HepG2 (cell line): ENCODE measurements at regions of chr5 and their contacts with region 1.

Region 1: DNA sequence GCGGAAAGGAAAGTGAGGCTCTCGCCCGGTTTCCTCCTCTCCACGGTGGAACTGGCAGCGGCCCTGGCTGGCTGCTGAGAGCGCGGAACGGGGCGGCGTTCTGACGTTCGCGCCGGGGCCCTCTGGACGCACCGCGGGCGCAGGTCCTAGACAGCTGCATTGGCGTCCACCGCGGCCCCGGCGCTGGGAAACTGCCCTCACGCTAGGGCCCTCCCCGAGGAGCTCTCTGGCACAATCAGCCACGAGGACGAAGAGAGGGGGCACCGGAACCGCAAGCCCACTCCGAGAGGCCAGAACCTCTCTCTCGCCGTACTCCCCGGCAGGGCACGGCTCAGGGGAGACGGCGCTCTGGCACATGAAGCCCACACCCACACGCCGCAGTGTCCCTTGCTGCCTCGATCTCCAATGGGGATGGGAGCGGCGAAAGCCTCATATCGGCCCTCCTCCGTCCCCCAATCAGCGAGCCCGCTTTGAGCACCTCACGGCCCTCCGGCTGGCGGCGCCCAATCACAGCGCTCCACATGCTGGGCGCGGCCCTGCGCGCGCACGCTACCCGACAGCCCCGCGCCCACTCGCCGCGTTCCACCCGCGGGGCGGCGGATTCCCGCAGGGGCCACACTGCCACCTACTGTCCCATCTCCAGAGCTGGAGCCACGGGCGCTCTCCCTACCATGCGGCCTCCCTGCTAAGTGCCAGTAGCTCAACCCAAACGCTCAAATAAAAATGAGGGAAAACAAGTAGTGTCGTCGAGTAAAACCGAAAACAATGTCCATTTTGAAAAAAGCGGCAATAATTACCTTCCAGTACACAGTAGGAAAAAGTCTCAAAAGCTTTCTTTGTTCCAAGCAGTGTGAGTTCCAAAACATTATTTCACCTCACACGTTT is 11.8 kb downstream of the MRPS27 start:
- DNase-seq: peak; percentile 93
- ATAC-seq: peak; percentile 99
- H3K4me3 ChIP-seq: peak overlapping the region; percentile 76 to 91 (median 80)
- H3K27ac ChIP-seq: peak overlapping the region; percentile 98
- H3K4me1 ChIP-seq: peaks cover 47% of the 10 kb centered on the region
- H3K27me3 ChIP-seq: no peaks in the 10 kb centered on the region
- CTCF ChIP-seq: peak; percentile 92
- EP300 ChIP-seq: peak in 1 of 2 experiments; percentile 17; a peak in 1 of 4 replicates
- POLR2A ChIP-seq: peak; percentile 98 to 100
- RAD21 ChIP-seq: peak; percentile 85

Region 2: GRCh38 chr5:71782771-71783770 is 525.1 kb before region 1 on chr5:
- CTCF ChIA-PET with region 1: no interaction called
- POLR2A ChIA-PET with region 1: no interaction called
- in situ Hi-C with region 1: loop called (anchors 25 kb)
- intact Hi-C with region 1: loop called (anchors 1 kb)
- DNase-seq: peak; percentile 32
- ATAC-seq: peak; percentile 80
- H3K4me3 ChIP-seq: peak overlapping the region in 2 of 3 experiments; percentile 4 to 42; a peak in 4 of 6 replicates
- H3K27ac ChIP-seq: no peak overlapping the region
- H3K4me1 ChIP-seq: peaks cover 12% of the 10 kb centered on the region
- H3K27me3 ChIP-seq: no peaks in the 10 kb centered on the region; a peak in 1 of 5 replicates
- CTCF ChIP-seq: peak; percentile 80
- EP300 ChIP-seq: no peak
- POLR2A ChIP-seq: no peak
- RAD21 ChIP-seq: peak; percentile 39; the same call in 1 of the 2 replicates

Region 3: DNA sequence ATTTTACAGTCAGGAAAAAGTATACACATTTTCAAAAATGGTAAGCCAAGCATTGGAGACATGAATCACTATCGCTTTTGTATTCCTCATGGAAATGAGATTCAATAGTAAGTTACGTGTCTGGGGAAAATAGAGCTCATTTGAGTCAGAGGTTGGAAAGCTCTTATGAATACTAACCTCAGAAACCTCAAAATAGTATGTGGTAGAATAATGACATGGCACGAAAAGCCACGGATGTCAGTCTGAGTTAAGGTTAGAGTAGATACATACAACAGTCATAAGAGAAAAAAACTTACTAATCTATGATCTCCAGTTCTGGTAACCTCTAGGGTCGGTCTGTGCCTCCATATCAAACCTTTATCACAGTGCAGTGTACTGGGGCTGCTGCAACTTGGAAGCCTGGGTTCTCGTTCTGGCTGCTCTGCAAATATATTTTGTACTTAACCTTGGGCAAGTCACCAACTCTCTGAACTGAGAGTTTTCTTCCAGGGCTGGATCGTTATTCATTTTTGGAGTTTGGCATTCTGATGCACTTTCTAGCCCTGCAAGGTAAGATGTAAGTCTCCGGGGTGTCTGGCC is 169.2 kb before region 1 on chr5:
- CTCF ChIA-PET with region 1: interaction called, 15 read pairs
- POLR2A ChIA-PET with region 1: no interaction called
- in situ Hi-C with region 1: loop called (anchors 5 kb)
- intact Hi-C with region 1: loop called (anchors 1 kb)
- DNase-seq: no peak
- ATAC-seq: no peak
- H3K4me3 ChIP-seq: no peak overlapping the region
- H3K27ac ChIP-seq: no peak overlapping the region
- H3K4me1 ChIP-seq: no peaks in the 10 kb centered on the region
- H3K27me3 ChIP-seq: no peaks in the 10 kb centered on the region
- CTCF ChIP-seq: no peak
- EP300 ChIP-seq: no peak
- POLR2A ChIP-seq: no peak
- RAD21 ChIP-seq: no peak

Region 4: GRCh38 chr5:72244862-72245371 is 63.3 kb before region 1 on chr5:
- CTCF ChIA-PET with region 1: interaction called, 6 read pairs
- POLR2A ChIA-PET with region 1: interaction called, 5 read pairs
- in situ Hi-C with region 1: no loop called
- intact Hi-C with region 1: loop called (anchors 1 kb)
- DNase-seq: peak; percentile 54
- ATAC-seq: peak; percentile 83
- H3K4me3 ChIP-seq: no peak overlapping the region
- H3K27ac ChIP-seq: no peak overlapping the region
- H3K4me1 ChIP-seq: peaks cover 84% of the 10 kb centered on the region
- H3K27me3 ChIP-seq: no peaks in the 10 kb centered on the region
- CTCF ChIP-seq: peak; percentile 58
- EP300 ChIP-seq: no peak
- POLR2A ChIP-seq: no peak
- RAD21 ChIP-seq: 0 out of 2 replicates have a peak, but pooled peaks have one; percentile 17

Region 5: DNA sequence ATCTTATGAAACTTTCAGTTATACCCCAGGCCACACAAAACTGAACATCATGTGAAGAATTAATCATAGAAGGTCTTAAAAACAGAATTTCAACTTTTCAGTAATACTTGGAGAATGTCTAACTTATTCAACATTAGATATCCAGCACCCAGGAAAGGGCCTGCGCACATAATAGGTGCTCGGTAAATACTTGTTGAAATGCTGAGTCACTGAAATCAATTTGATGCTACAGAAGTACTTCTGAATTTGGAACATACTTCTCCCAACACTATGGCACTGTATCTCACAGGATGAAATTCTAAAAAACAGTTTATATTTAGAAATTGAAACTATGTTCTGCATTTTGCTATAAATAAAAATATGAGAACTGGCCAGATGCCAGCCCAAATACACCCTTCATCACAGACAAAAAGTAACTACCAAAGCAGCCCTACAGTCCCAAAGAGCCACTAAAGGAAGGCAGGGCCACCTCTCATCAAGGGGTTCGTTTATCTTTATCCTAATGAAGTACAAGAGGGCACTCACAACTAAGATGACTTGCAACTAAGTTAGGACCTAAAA is 14.6 kb before region 1 on chr5:
- CTCF ChIA-PET with region 1: no interaction called
- POLR2A ChIA-PET with region 1: interaction called, 10 read pairs
- in situ Hi-C with region 1: no loop called
- intact Hi-C with region 1: loop called (anchors 2 kb)
- DNase-seq: no peak
- ATAC-seq: no peak
- H3K4me3 ChIP-seq: no peak overlapping the region
- H3K27ac ChIP-seq: peak overlapping the region; percentile 29
- H3K4me1 ChIP-seq: peaks cover 54% of the 10 kb centered on the region
- H3K27me3 ChIP-seq: no peaks in the 10 kb centered on the region
- CTCF ChIP-seq: no peak
- EP300 ChIP-seq: no peak
- POLR2A ChIP-seq: no peak
- RAD21 ChIP-seq: no peak

Region 6: DNA sequence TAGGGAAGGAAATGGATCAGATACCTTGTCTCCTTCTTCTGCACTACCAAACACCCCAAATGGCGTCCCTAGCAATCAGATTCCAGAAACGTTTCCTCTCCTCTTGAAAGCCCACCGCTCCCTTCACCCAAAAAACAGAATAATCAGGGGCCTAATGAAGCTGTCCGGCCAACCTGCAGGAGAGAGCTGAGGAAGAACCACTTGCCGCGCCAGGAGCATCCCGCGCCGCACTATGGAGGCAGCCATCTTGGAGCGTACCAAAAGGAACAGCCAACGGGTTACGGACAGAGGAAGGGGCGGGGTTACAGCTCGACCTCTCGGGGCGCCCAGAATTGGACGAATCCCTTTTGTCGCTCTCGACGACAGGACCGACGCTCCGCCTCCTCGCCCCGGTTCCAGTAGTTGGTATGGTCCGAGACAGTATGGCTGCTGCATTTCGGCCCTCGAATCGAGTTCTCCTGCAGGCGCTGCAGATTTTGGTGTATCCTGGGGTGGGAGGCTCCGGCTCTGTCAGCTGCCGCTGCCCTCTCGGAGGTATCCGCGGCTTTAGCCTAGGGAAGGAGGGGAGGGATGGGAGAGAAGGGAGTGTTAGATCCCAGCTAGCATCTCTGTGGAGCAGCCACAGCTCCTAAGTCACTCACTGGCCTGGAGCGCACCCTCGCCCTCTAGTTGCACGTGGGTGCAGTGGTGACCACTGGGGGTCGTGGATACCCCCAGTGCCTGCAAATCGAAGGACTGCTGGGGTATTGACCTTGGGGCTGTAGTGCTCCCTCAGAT is 12.0 kb after region 1 on chr5 and contains the starts of genes MRPS27 and PTCD2:
- CTCF ChIA-PET with region 1: no interaction called
- POLR2A ChIA-PET with region 1: interaction called, 60 read pairs
- in situ Hi-C with region 1: no loop called
- intact Hi-C with region 1: no loop called
- DNase-seq: peak; percentile 95
- ATAC-seq: peak; percentile 99
- H3K4me3 ChIP-seq: peak within 1 kb of the TSS; percentile 65 to 91 (median 90)
- H3K27ac ChIP-seq: peak within 1 kb of the TSS; percentile 76
- H3K4me1 ChIP-seq: peaks cover 37% of the 10 kb centered on the region
- H3K27me3 ChIP-seq: no peaks in the 10 kb centered on the region; a peak in 2 of 5 replicates
- CTCF ChIP-seq: peak; percentile 53
- EP300 ChIP-seq: 0 out of 4 replicates have a peak, but pooled peaks of 1 of the 2 experiments have one; percentile 18
- POLR2A ChIP-seq: peak; percentile 88 to 89
- RAD21 ChIP-seq: no peak
- total RNA-seq, gene MRPS27: 115 and 139 TPM in 2 replicates
- total RNA-seq, gene PTCD2: 6.4 and 7.0 TPM in 2 replicates

Region 7: DNA sequence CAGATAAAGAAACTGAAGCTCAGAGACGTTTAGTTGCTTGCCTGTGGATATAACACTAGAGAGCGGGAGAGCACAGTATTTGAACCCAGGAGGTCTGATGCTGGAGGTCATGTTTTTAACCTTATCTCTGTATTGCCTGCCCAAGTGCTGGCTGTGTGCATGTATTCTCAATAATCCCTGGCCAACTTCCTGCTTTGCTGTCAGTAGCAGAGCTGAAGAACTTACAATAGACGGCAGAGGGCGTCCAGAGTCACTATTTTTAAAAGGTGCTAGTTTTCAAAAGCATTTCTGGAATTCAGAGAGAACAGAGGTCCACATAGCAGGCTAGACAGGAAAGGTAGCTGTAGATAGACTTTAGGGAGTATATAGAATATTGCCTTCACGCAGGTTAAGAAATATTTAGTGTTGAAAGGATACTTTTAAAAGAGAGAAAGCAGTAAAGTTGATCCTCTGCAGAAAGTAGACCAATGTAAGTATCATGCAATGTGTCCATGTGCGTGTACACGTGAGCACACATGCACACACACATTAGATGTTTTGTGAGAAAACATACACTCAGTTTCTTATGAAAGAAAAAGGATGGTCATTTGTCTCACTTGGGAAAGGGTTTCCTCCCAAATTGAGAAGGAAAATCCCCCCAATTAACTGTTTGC is 58.2 kb after region 1 on chr5:
- CTCF ChIA-PET with region 1: no interaction called
- POLR2A ChIA-PET with region 1: no interaction called
- in situ Hi-C with region 1: no loop called
- intact Hi-C with region 1: no loop called
- DNase-seq: peak; percentile 67
- ATAC-seq: peak; percentile 97
- H3K4me3 ChIP-seq: no peak overlapping the region
- H3K27ac ChIP-seq: no peak overlapping the region
- H3K4me1 ChIP-seq: peaks cover 6% of the 10 kb centered on the region; the same call in 1 of the 2 replicates
- H3K27me3 ChIP-seq: no peaks in the 10 kb centered on the region
- CTCF ChIP-seq: peak; percentile 77
- EP300 ChIP-seq: no peak
- POLR2A ChIP-seq: no peak
- RAD21 ChIP-seq: peak; percentile 57

Region 8: GRCh38 chr5:72427488-72428437 is 119.6 kb after region 1 on chr5:
- CTCF ChIA-PET with region 1: no interaction called
- POLR2A ChIA-PET with region 1: no interaction called
- in situ Hi-C with region 1: no loop called
- intact Hi-C with region 1: no loop called
- DNase-seq: no peak
- ATAC-seq: no peak
- H3K4me3 ChIP-seq: no peak overlapping the region
- H3K27ac ChIP-seq: no peak overlapping the region
- H3K4me1 ChIP-seq: no peaks in the 10 kb centered on the region
- H3K27me3 ChIP-seq: peaks cover 0 to 6% of the 10 kb centered on the region in 2 experiments; a peak in 1 of 5 replicates
- CTCF ChIP-seq: no peak
- EP300 ChIP-seq: no peak
- POLR2A ChIP-seq: no peak
- RAD21 ChIP-seq: no peak

Region 9: DNA sequence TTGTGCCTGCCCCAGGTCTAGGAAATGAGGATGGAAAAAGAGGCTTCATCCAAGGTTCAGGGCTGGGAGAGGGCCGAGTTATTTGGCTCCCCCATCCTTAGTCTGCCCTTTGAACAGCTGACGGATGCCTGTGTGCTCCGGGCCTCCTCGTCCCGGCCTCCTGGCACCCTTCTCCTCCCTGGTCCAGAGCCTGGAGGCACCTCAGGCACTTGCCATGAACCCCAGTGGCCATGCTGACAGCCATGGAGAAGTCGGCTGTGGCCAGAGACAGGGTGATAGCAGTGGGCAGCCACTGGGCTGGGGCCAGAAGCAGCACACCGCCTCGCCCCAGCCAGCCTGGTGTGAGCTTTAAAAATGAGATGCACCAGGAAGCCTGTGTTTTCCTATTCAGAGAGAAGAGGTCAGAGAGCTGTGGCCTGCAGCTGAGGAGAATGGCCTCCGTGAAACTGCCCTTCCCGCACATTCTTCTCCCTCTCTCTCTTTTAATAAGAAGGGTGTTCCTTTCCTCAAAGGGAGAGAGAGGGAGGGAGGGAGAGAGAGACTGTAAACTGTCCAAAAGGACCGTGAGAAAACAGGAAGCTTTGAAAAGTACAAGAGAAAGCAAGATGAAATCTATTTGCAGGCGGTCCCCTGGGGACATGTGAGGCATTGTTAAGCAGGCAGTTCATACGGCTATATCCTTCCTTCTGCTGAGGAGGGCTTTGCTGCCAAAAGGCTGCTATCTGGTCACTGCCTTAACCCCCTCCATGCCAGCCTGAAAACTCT is 143.7 kb after region 1 on chr5:
- CTCF ChIA-PET with region 1: no interaction called
- POLR2A ChIA-PET with region 1: no interaction called
- in situ Hi-C with region 1: no loop called
- intact Hi-C with region 1: no loop called
- DNase-seq: no peak
- ATAC-seq: no peak
- H3K4me3 ChIP-seq: no peak overlapping the region
- H3K27ac ChIP-seq: no peak overlapping the region
- H3K4me1 ChIP-seq: no peaks in the 10 kb centered on the region
- H3K27me3 ChIP-seq: peaks cover 2 to 21% of the 10 kb centered on the region in 2 experiments; a peak in 4 of 5 replicates
- CTCF ChIP-seq: no peak
- EP300 ChIP-seq: no peak
- POLR2A ChIP-seq: no peak
- RAD21 ChIP-seq: no peak

Region 10: GRCh38 chr5:72624641-72625236 is 316.5 kb after region 1 on chr5:
- CTCF ChIA-PET with region 1: no interaction called
- POLR2A ChIA-PET with region 1: no interaction called
- in situ Hi-C with region 1: no loop called
- intact Hi-C with region 1: no loop called
- DNase-seq: no peak
- ATAC-seq: no peak
- H3K4me3 ChIP-seq: no peak overlapping the region
- H3K27ac ChIP-seq: no peak overlapping the region
- H3K4me1 ChIP-seq: no peaks in the 10 kb centered on the region
- H3K27me3 ChIP-seq: peaks cover 0 to 3% of the 10 kb centered on the region in 2 experiments; a peak in 1 of 5 replicates
- CTCF ChIP-seq: no peak
- EP300 ChIP-seq: no peak
- POLR2A ChIP-seq: no peak
- RAD21 ChIP-seq: no peak